ENCODE measurements at regions of chr5 and their contacts with region 1.

Region 1: GRCh38 chr5:80141147-80141671 is 106.1 kb downstream of the THBS4 start:
- DNase-seq: peak in 1 of 9 experiments; percentile 47
- ATAC-seq: no peak
- H3K4me3 ChIP-seq: no peak overlapping the region
- H3K4me3 Mint-ChIP-seq: peak overlapping the region; percentile 50
- H3K27ac ChIP-seq: peak overlapping the region; percentile 9 to 55
- H3K27ac Mint-ChIP-seq: peak overlapping the region; percentile 91
- H3K4me1 ChIP-seq: peaks cover 70% of the 10 kb centered on the region
- H3K4me1 Mint-ChIP-seq: peaks cover 74% of the 10 kb centered on the region
- H3K27me3 ChIP-seq: no peaks in the 10 kb centered on the region
- H3K27me3 Mint-ChIP-seq: no peaks in the 10 kb centered on the region
- CTCF ChIP-seq: no peak

Region 2: GRCh38 chr5:78648359-78649210 is 1492.6 kb before region 1 on chr5 and contains the start of gene LHFPL2:
- CTCF ChIA-PET with region 1: no interaction called
- POLR2A ChIA-PET with region 1: no interaction called
- intact Hi-C with region 1: no loop called
- DNase-seq: peak in 5 of 9 experiments; percentile 6 to 50 (median 20)
- ATAC-seq: no peak
- H3K4me3 ChIP-seq: peak within 1 kb of the TSS; percentile 31 to 35
- H3K4me3 Mint-ChIP-seq: peak within 1 kb of the TSS; percentile 77
- H3K27ac ChIP-seq: no peak within 1 kb of the TSS
- H3K27ac Mint-ChIP-seq: no peak within 1 kb of the TSS
- H3K4me1 ChIP-seq: peaks cover 15% of the 10 kb centered on the region
- H3K4me1 Mint-ChIP-seq: peaks cover 16% of the 10 kb centered on the region
- H3K27me3 ChIP-seq: peaks cover 8 to 14% of the 10 kb centered on the region in 2 experiments
- H3K27me3 Mint-ChIP-seq: peaks cover 52% of the 10 kb centered on the region
- CTCF ChIP-seq: no peak
- total RNA-seq, gene LHFPL2: 0.57 to 0.94 TPM

Region 3: GRCh38 chr5:80026841-80027240 is 114.4 kb before region 1 on chr5:
- CTCF ChIA-PET with region 1: no interaction called
- POLR2A ChIA-PET with region 1: no interaction called
- intact Hi-C with region 1: no loop called
- DNase-seq: no peak
- ATAC-seq: no peak
- H3K4me3 ChIP-seq: no peak overlapping the region
- H3K4me3 Mint-ChIP-seq: no peak overlapping the region
- H3K27ac ChIP-seq: no peak overlapping the region
- H3K27ac Mint-ChIP-seq: no peak overlapping the region
- H3K4me1 ChIP-seq: peaks cover 9% of the 10 kb centered on the region
- H3K4me1 Mint-ChIP-seq: peaks cover 11% of the 10 kb centered on the region
- H3K27me3 ChIP-seq: no peaks in the 10 kb centered on the region
- H3K27me3 Mint-ChIP-seq: peaks cover 8% of the 10 kb centered on the region
- CTCF ChIP-seq: no peak

Region 4: GRCh38 chr5:80125962-80126480 is 15.2 kb before region 1 on chr5:
- CTCF ChIA-PET with region 1: interaction called, 5 read pairs
- POLR2A ChIA-PET with region 1: interaction called, 9 read pairs
- intact Hi-C with region 1: loop called in 1 of 2 experiments (anchors 1 kb)
- DNase-seq: peak in 2 of 9 experiments; percentile 24 to 53
- ATAC-seq: peak; percentile 86
- H3K4me3 ChIP-seq: no peak overlapping the region
- H3K4me3 Mint-ChIP-seq: no peak overlapping the region
- H3K27ac ChIP-seq: no peak overlapping the region
- H3K27ac Mint-ChIP-seq: peak overlapping the region; percentile 72
- H3K4me1 ChIP-seq: peaks cover 35% of the 10 kb centered on the region
- H3K4me1 Mint-ChIP-seq: peaks cover 63% of the 10 kb centered on the region
- H3K27me3 ChIP-seq: no peaks in the 10 kb centered on the region
- H3K27me3 Mint-ChIP-seq: no peaks in the 10 kb centered on the region
- CTCF ChIP-seq: peak; percentile 30

Region 5: DNA sequence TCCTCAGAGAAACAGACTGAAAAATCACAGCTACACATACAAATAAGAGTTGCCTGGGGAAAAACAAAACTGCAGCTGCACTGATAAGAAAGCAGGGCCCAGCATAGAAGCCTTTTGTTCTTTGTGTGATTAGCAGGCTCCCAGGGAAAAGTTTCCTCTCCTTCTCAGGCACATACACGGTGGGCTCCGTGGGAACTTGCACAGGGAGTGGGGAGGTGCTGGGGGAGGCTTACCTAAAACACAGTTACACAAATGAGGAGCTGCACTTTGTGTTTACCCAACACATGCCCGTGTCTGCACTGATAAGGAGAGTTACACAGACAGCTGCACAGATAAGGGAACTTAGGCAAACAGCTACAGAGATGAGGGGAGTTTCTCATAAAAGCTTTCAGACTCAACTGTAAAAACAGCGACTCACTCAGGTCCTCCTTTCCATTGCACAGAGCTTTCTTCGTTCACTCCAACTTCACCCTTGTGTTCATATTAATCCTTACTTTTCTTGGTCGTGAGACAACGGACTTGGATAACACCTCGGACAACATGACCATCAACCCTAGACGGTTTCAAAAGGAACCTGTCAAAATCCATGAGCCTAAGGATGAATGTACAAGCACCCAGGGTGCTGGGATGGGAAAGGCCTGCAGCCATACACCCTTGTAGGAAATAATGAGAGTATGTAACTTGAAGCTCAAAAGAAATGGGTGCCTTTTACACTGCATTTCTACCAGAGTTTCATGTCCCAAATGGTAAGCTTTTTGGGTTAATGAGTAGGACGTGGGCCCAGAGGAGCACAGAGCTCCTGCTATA is 63.8 kb after region 1 on chr5:
- CTCF ChIA-PET with region 1: interaction called, 11 read pairs
- POLR2A ChIA-PET with region 1: interaction called, 3 read pairs
- intact Hi-C with region 1: no loop called
- DNase-seq: peak in 2 of 9 experiments; percentile 31 to 64
- ATAC-seq: peak; percentile 82
- H3K4me3 ChIP-seq: no peak overlapping the region
- H3K4me3 Mint-ChIP-seq: peak overlapping the region; percentile 47
- H3K27ac ChIP-seq: peak overlapping the region in 1 of 2 experiments; percentile 27
- H3K27ac Mint-ChIP-seq: peak overlapping the region; percentile 87
- H3K4me1 ChIP-seq: peaks cover 78% of the 10 kb centered on the region
- H3K4me1 Mint-ChIP-seq: peaks cover 88% of the 10 kb centered on the region
- H3K27me3 ChIP-seq: no peaks in the 10 kb centered on the region
- H3K27me3 Mint-ChIP-seq: no peaks in the 10 kb centered on the region
- CTCF ChIP-seq: peak; percentile 34